Heart right ventricle (tissue), 16 donors: ENCODE measurements at regions of chr3 and their contacts with region 1.

Region 1: GRCh38 chr3:185659942-185660921 is 74.1 kb downstream of the SENP2 start:
- DNase-seq: peak; percentile 61 to 62
- ATAC-seq: peak; percentile 45 to 82 (median 66)
- H3K4me3 ChIP-seq: peak overlapping the region in 1 of 10 donors; percentile 12
- H3K27ac ChIP-seq: peak overlapping the region in 1 of 10 donors; percentile 50
- H3K4me1 ChIP-seq: peaks cover 0 to 38% (median 11%) of the 10 kb centered on the region in 9 donors
- H3K27me3 ChIP-seq: no peaks in the 10 kb centered on the region
- CTCF ChIP-seq: peak; percentile 82 to 98 (median 95)

Region 2: GRCh38 chr3:185764163-185764979 is 104.1 kb after region 1 on chr3:
- intact Hi-C with region 1: loop called in 8 of 10 experiments (anchors 1 to 10 kb)
- DNase-seq: no peak
- ATAC-seq: peak in 5 of 8 donors; percentile 41 to 57 (median 56)
- H3K4me3 ChIP-seq: peak overlapping the region in 5 of 10 donors; percentile 1 to 27 (median 11)
- H3K27ac ChIP-seq: peak overlapping the region in 6 of 10 donors; percentile 6 to 57 (median 29)
- H3K4me1 ChIP-seq: peaks cover 6 to 40% (median 23%) of the 10 kb centered on the region in 9 donors
- H3K27me3 ChIP-seq: no peaks in the 10 kb centered on the region
- CTCF ChIP-seq: no peak

Region 3: GRCh38 chr3:185937689-185938463 is 277.6 kb after region 1 on chr3 and contains the start of gene TRA2B:
- intact Hi-C with region 1: loop called in 1 of 10 experiments (anchors 10 kb)
- DNase-seq: peak; percentile 99
- ATAC-seq: peak; percentile 98 to 99 (median 99)
- H3K4me3 ChIP-seq: peak within 1 kb of the TSS; percentile 80 to 100 (median 94)
- H3K27ac ChIP-seq: peak within 1 kb of the TSS; percentile 98 to 100 (median 100)
- H3K4me1 ChIP-seq: peaks cover 0 to 39% (median 30%) of the 10 kb centered on the region in 9 donors
- H3K27me3 ChIP-seq: no peaks in the 10 kb centered on the region
- CTCF ChIP-seq: peak in 8 of 9 donors; percentile 12 to 66 (median 40)
- total RNA-seq, gene TRA2B: 46.3 to 75.9 (median 52.1) TPM

Region 4: DNA sequence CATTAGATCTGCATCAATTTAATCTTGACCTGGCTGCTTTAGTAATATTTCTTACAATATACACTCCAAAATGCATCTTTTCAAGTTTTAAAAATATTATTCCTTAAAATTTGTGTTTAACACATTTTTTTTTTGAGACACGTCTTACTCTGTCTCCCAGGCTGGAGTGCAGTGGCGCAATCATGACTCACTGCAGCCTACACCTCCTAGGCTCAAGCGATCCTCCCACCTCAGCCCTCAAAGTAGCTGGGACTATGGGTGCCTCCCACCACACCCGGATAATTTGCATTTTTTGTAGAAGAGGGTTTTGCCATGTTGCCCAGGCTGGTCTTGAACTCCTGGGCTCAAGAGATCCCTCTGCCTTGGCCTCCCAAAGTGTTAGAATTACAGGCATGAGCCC is 375.0 kb after region 1 on chr3:
- intact Hi-C with region 1: no loop called
- DNase-seq: no peak
- ATAC-seq: no peak
- H3K4me3 ChIP-seq: no peak overlapping the region
- H3K27ac ChIP-seq: no peak overlapping the region
- H3K4me1 ChIP-seq: no peaks in the 10 kb centered on the region
- H3K27me3 ChIP-seq: peaks cover 0 to 20% (median 0%) of the 10 kb centered on the region in 7 donors
- CTCF ChIP-seq: no peak